Lower leg skin (tissue), 4 donors: ENCODE measurements at regions of chr7 and their contacts with region 1.

Region 1: DNA sequence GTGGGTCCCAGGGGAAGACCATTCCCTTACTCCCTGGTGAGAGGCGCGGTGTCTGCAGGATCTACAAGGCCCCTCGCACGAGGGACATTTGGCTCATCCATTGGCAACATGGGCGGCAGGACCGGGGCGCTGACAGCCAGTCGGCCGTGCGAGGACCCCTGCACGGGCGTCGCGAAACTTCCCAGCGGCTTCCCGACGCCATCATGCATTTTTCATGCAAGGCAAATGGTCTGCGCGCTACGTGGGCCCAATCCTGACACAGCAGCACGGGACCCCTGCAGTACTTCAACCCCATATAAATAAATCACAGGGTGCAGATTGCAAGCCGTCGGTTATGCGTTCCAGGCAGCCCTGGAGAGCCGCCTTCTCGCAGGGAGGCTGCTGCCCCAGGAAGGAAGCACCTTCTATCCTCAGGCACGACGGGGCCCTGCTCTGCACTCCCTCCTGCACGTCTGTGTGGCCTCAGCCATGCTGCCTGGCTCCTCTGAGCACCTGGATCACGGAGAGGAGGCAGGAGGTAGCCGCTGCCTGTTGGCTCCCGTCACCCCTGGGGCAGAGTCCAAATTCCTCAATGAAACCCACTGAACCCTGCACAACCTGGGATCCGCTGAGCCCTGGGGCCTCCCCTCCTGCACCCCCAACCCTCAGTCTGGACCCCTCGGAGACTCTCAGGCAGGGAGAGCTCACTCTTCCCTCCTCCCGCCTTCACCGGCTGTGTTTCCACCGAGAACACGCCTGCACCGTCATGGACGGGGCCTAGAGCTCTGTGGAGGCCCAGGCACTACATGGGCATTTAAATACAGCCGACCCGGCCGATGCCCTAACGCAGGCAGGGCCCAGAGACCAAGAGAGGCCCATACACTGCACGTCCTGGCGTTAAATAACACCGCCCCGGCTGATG is 90.5 kb downstream of the PDGFA start:
- DNase-seq: no peak
- H3K4me3 ChIP-seq: no peak overlapping the region
- CTCF ChIP-seq: no peak
- POLR2A ChIP-seq: no peak

Region 2: GRCh38 chr7:395621-396020 is 33.6 kb before region 1 on chr7:
- intact Hi-C with region 1: loop called (anchors 2 kb)
- DNase-seq: no peak
- H3K4me3 ChIP-seq: no peak overlapping the region
- CTCF ChIP-seq: no peak
- POLR2A ChIP-seq: no peak

Region 3: DNA sequence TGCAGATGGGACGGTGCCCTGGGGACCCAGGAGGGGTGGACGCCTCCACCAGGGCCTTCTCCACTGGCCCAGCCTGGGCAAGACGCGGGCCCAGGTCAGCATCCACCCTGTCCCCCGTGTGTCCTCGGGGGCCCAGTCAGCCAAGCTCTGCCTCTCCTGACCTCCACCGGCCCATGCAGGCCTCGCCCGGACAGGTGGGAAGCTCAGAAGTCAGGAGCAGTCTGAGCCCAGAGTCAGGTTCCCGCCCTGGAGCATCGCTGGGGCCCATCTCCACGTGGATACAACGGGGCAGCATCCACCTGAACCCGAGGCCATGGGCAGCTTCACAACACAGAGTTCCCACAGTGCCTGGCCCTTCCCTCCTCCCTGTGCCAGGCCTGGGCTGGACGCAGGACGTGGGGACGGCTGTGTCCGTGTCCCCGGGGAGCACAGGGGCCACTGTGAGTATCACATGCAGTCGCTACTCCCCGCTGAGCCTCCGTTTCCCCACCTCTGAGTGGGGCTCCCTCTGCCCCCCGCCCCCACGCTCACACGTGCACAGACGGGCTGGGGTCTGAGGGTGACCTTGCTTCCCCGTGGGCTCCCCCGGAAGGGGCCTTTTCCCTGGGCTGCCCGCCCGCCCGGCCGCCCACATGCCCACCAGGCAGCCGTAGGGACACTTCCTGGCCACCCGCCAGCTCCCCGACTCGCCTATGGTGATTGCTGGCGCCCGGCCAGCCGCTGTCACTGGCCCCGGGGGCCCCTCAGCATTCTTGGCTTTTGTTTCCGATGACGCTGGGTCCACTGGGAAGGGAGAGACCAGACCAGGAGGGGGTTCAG is 26.1 kb after region 1 on chr7:
- intact Hi-C with region 1: no loop called
- DNase-seq: no peak
- H3K4me3 ChIP-seq: no peak overlapping the region
- CTCF ChIP-seq: no peak
- POLR2A ChIP-seq: no peak

Region 4: GRCh38 chr7:480531-481218 is 51.5 kb after region 1 on chr7:
- intact Hi-C with region 1: no loop called
- DNase-seq: no peak
- H3K4me3 ChIP-seq: no peak overlapping the region
- CTCF ChIP-seq: no peak
- POLR2A ChIP-seq: no peak

Region 5: GRCh38 chr7:706721-707120 is 277.5 kb after region 1 on chr7:
- intact Hi-C with region 1: no loop called
- DNase-seq: peak in 1 of 2 donors; percentile 59
- H3K4me3 ChIP-seq: no peak overlapping the region
- CTCF ChIP-seq: no peak
- POLR2A ChIP-seq: no peak

Region 6: DNA sequence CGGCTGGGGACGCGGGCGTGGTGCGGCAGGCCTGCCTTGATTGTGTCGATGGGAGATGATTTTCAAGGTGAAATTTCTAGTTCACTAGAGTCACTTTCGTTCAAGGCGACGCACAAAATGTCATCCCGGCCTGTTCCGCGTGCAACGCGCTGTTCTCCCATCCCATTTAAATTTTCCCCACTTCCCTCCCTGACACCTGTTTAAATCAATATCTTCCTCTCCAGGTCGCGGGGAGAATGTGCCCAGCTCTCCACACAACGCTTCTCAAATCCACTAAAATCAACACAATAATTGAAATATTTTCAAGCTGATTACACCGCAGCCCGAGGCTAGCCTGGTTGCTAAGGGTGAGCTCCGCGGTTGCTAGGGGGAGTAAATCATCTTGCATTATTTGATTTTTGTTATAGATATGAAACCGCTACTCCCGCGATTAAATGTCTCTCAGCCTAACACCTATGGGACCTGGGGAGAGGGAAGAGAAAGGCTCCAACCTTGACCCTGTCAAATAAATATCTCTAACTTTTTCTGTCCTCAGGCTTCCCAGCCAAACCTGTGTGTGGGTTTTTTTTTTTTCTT is 839.6 kb after region 1 on chr7:
- intact Hi-C with region 1: no loop called
- DNase-seq: no peak
- H3K4me3 ChIP-seq: no peak overlapping the region
- CTCF ChIP-seq: no peak
- POLR2A ChIP-seq: no peak